Left colon (tissue), 2 donors: ENCODE measurements at regions of chr12 and their contacts with region 1.

Region 1: DNA sequence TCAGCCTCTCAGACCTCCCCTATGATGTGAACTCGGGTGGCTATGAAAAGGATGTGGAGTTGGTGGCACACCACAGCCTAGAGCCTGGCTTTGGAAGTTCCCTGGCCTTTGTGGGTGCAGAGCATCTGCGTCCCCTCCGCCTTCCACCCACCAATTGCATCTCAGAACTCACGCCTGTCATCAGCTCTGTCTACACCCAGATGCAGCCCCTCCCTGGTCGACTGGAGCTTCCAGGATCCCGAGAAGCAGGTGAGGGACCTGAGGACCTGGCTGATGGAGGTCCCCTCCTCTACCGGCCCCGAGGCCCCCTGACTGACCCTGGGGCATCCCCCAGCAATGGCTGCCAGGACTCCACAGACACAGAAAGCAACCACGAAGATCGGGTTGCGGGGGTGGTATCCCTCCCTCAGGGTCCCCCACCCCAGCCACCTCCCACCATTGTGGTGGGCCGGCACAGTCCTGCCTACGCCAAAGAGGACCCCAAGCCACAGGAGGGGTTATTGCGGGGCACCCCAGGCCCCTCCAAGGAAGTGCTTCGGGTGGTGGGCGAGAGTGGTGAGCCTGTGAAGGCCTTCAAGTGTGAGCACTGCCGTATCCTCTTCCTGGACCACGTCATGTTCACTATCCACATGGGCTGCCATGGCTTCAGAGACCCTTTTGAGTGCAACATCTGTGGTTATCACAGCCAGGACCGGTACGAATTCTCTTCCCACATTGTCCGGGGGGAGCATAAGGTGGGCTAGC is 7.0 kb upstream of the RPS26 start:
- DNase-seq: no peak
- ATAC-seq: no peak

Region 2: DNA sequence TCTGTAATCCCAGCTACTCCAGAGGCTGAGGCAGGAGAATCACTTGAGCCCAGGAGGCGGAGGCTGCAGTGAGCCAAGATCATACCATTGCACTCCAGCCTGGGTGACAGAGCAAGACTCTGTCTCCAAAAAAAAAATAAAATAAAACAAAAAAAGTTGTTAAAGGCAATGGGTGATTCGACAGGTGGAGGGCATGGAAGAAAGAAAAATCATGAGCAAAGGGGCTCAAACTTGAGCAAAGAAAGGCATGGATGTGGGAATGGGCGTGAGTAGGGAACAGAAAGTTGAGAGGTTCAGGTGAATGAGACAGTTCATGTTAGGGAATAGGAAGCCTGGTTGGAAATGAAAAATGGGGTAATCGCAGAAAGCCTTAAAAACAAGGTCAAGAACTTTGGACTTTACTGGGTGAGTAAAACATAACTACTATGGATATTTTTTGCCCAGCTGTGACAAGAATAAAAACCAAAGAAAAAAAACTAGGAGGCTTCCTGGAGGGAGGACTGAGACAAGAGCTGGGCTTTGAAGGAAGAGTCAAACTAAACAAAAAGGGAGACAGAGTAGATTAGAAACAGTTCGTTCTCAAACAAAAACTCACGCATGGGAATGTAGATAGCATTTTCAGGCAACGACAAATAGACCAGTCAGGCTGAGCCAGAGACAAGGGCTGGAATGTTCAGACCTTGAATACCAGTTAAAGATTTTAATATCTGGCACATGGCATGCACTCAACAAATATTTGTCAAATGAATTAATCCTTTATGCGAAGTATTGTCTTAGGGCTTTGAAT is 125.8 kb before region 1 on chr12:
- intact Hi-C with region 1: no loop called
- DNase-seq: no peak
- ATAC-seq: no peak

Region 3: DNA sequence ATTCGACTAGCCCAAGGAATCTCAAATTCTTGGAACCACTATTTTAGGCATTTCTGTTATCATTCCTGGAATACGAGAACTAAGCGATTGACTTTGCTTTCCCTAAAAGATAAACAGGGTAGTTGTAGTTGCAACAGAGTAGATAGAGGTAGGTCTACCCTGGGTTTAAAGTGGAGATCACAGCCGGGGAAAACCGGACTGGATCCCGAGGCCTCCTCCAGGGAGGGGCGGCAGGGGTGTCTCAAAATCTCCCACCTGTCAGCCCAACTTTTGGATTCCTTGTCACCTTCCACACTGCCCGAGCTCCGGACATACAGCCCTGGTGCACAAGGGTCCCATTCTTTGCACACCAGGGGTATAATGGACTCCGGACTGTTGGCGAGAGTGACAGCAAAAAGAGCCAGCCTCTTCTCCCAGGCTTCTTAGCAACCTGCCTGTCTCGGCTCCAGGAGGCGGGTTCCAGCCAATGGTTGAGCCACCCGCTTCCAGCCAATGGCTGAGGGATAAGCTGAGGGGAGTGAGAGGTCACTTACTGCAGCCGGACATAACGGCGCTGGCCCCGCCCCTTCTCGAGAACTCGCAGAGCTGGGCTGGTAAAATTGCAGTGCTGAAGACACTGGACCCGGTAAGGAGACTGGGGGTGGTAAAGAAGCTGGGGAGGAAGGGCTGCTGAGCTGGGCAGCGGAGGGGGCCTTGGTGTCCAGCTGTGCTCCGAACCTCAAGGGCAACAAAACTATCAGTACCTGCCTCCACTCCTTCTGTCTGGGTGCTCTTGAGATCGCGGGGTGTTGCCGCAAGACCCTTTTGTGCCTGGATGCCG is 37.8 kb before region 1 on chr12 and contains the start of gene SUOX:
- intact Hi-C with region 1: loop called in 1 of 2 experiments (anchors 5 kb)
- DNase-seq: peak; percentile 95 to 99
- ATAC-seq: peak; percentile 94
- total RNA-seq, gene SUOX: 24.1 to 24.4 TPM